PC-3 (cell line): ENCODE measurements at regions of chr3 and their contacts with region 1.

Region 1: GRCh38 chr3:80285388-80285787 is 517.6 kb upstream of the ROBO1 start:
- DNase-seq: peak; percentile 57
- ATAC-seq: peak; percentile 51
- H3K4me3 ChIP-seq: no peak overlapping the region
- H3K27ac ChIP-seq: no peak overlapping the region
- H3K4me1 ChIP-seq: peaks cover 31% of the 10 kb centered on the region
- H3K27me3 ChIP-seq: no peaks in the 10 kb centered on the region
- CTCF ChIP-seq: no peak

Region 2: DNA sequence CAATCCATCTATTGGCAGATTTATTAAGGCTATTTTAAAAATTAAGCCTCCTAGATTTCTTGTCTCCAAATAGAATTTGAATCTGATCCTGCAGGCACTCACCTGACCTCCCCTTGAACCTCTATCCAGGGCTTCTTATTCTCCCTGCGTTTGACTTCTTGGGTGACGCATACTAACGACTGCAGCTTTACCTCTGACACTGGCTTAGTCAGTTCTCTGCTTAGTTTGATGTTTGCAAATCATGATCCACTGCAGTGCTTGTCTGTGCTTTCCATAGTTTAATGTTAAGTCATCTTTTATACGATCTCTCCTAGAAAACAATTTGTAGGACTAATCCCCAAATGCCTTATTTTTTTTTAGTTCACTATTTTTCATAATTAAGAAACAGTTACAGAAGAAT is 750.7 kb before region 1 on chr3:
- CTCF ChIA-PET with region 1: no interaction called
- POLR2A ChIA-PET with region 1: no interaction called
- intact Hi-C with region 1: loop called (anchors 5 kb)
- DNase-seq: peak; percentile 80
- ATAC-seq: peak; percentile 86
- H3K4me3 ChIP-seq: no peak overlapping the region
- H3K27ac ChIP-seq: peak overlapping the region; percentile 67
- H3K4me1 ChIP-seq: peaks cover 46% of the 10 kb centered on the region
- H3K27me3 ChIP-seq: no peaks in the 10 kb centered on the region
- CTCF ChIP-seq: no peak

Region 3: DNA sequence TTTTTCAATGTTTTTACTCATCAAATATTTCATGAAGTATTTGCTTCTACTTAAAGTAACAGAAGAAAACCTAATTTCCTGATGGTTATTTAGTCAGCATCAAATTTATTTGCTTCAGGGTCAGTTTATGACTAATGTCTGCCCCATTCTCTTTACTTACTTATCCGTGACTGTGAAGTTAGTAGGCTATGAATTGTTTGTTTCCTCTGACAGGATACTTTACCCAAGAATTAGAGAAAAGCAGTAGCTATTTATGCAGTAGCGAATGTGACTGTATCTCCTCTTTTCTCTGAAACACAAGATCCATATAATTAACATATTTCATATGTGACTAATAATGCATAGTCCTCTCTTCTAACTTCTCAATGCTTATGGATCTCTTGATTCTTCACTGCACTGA is 187.7 kb before region 1 on chr3:
- CTCF ChIA-PET with region 1: no interaction called
- POLR2A ChIA-PET with region 1: no interaction called
- intact Hi-C with region 1: loop called (anchors 5 kb)
- DNase-seq: peak; percentile 84
- ATAC-seq: peak; percentile 99
- H3K4me3 ChIP-seq: no peak overlapping the region
- H3K27ac ChIP-seq: peak overlapping the region; percentile 24
- H3K4me1 ChIP-seq: peaks cover 31% of the 10 kb centered on the region
- H3K27me3 ChIP-seq: no peaks in the 10 kb centered on the region
- CTCF ChIP-seq: no peak

Region 4: DNA sequence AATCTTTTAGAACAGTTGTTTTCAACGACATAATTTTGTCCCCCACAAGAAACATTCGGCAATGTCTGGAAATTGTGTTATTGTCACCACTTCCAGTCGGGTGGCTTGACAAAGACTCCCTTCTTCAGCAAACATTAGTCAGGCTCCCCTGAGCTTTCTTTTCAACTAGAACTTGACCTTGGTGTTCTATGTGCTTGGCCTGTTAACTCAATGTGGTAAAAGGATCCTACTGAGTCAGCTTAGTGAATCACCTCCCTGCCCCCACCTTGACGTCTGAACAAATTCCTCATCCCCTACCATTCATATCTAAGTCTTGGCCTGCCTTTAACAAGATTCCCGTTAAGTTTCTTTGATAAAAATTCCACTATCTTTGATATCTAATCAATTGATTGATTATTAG is 52.6 kb before region 1 on chr3:
- CTCF ChIA-PET with region 1: no interaction called
- POLR2A ChIA-PET with region 1: no interaction called
- intact Hi-C with region 1: loop called (anchors 5 kb)
- DNase-seq: peak; percentile 95
- ATAC-seq: peak; percentile 96
- H3K4me3 ChIP-seq: peak overlapping the region; percentile 58
- H3K27ac ChIP-seq: peak overlapping the region; percentile 84
- H3K4me1 ChIP-seq: peaks cover 30% of the 10 kb centered on the region
- H3K27me3 ChIP-seq: no peaks in the 10 kb centered on the region
- CTCF ChIP-seq: no peak

Region 5: GRCh38 chr3:80521074-80521473 is 235.7 kb after region 1 on chr3:
- CTCF ChIA-PET with region 1: no interaction called
- POLR2A ChIA-PET with region 1: no interaction called
- intact Hi-C with region 1: loop called (anchors 10 kb)
- DNase-seq: peak; percentile 65
- ATAC-seq: peak; percentile 85
- H3K4me3 ChIP-seq: no peak overlapping the region
- H3K27ac ChIP-seq: no peak overlapping the region
- H3K4me1 ChIP-seq: peaks cover 16% of the 10 kb centered on the region
- H3K27me3 ChIP-seq: no peaks in the 10 kb centered on the region
- CTCF ChIP-seq: no peak